Activated T-helper 2 cell treated with anti-CD3 and anti-CD28 coated beads, Interferon-gamma antibody, Interleukin-2, Interleukin-4, amounts not matched to agents 10 μg/mL and 5 μg/mL and 100 μg/mL, durations not matched to agents 14 hours and 24 hours and 36 hours (primary cell): ENCODE measurements at regions of chr21 and their contacts with region 1.

Region 1: GRCh38 chr21:26842976-26843932 is 2.0 kb downstream of the ADAMTS1 start:
- DNase-seq: peak; percentile 40
- H3K4me3 Mint-ChIP-seq: peak overlapping the region; percentile 83
- H3K27ac Mint-ChIP-seq: peak overlapping the region; percentile 67
- H3K4me1 Mint-ChIP-seq: peaks cover 45% of the 10 kb centered on the region
- H3K27me3 Mint-ChIP-seq: peaks cover 60% of the 10 kb centered on the region

Region 2: GRCh38 chr21:26769613-26770188 is 73.6 kb before region 1 on chr21:
- intact Hi-C with region 1: loop called (anchors 5 kb)
- DNase-seq: no peak
- H3K4me3 Mint-ChIP-seq: no peak overlapping the region
- H3K27ac Mint-ChIP-seq: no peak overlapping the region
- H3K4me1 Mint-ChIP-seq: no peaks in the 10 kb centered on the region
- H3K27me3 Mint-ChIP-seq: peaks cover 2% of the 10 kb centered on the region

Region 3: GRCh38 chr21:26967062-26967913 is 124.0 kb after region 1 on chr21 and contains the start of gene ADAMTS5:
- intact Hi-C with region 1: loop called (anchors 5 kb)
- DNase-seq: no peak
- H3K4me3 Mint-ChIP-seq: no peak within 1 kb of the TSS
- H3K27ac Mint-ChIP-seq: no peak within 1 kb of the TSS
- H3K4me1 Mint-ChIP-seq: no peaks in the 10 kb centered on the region
- H3K27me3 Mint-ChIP-seq: peaks cover 39% of the 10 kb centered on the region
- total RNA-seq, gene ADAMTS5: not detected in 2 replicates

Region 4: GRCh38 chr21:27564684-27565301 is 721.5 kb after region 1 on chr21:
- intact Hi-C with region 1: loop called (anchors 5 kb)
- DNase-seq: no peak
- H3K4me3 Mint-ChIP-seq: no peak overlapping the region
- H3K27ac Mint-ChIP-seq: no peak overlapping the region
- H3K4me1 Mint-ChIP-seq: no peaks in the 10 kb centered on the region
- H3K27me3 Mint-ChIP-seq: no peaks in the 10 kb centered on the region